ENCODE measurements at regions of chr2 and their contacts with region 1.

Region 1: GRCh38 chr2:84022810-84023431 is 436.2 kb downstream of the SUCLG1 start:
- DNase-seq: peak; percentile 49
- H3K4me3 ChIP-seq: no peak overlapping the region
- H3K27ac ChIP-seq: no peak overlapping the region
- H3K4me1 ChIP-seq: no peaks in the 10 kb centered on the region
- H3K27me3 ChIP-seq: no peaks in the 10 kb centered on the region
- CTCF ChIP-seq: peak; percentile 83 to 84

Region 2: DNA sequence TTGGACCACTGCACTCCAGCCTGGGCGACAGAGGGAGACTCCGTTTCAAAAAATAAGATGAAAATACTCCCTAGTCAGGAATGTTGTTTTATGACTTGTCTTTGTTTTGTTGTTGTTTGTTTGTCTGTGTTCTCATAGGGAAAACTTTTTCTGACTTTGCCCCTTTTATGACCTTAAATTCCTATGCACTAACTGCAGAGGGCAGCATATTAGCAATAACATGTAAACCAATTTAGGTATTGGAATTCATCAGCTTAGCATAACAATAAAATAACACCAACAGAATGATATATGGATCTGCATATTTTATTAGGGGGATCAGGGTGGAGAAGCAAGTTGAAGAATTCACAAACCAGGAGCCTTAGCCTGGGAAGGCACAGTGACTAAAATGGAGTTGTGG is 195.3 kb before region 1 on chr2:
- CTCF ChIA-PET with region 1: no interaction called
- dilution Hi-C with region 1: no loop called
- in situ Hi-C with region 1: no loop called
- intact Hi-C with region 1: loop called (anchors 2 kb)
- DNase-seq: no peak
- H3K4me3 ChIP-seq: no peak overlapping the region
- H3K27ac ChIP-seq: no peak overlapping the region
- H3K4me1 ChIP-seq: no peaks in the 10 kb centered on the region
- H3K27me3 ChIP-seq: no peaks in the 10 kb centered on the region
- CTCF ChIP-seq: peak; percentile 42 to 62

Region 3: DNA sequence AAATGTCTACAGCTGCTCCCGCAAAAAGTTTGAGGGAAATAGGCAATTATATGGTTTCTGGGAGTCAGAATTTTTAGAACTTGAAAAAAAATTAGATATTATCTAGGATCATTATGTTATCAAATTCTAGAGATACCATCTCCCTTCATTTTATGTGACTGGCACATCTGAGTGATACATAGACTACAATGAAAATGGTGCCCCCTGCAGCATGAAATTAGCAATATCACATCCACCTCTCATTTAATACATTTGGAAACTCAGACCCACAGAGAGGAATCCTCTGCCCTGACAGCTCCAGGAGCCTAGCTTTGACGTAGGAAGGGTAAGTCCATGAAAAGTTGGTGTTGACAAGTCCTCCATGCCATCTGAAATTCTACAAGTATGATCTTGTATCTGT is 54.6 kb after region 1 on chr2:
- CTCF ChIA-PET with region 1: no interaction called
- dilution Hi-C with region 1: no loop called
- in situ Hi-C with region 1: loop called (anchors 5 to 10 kb)
- intact Hi-C with region 1: loop called (anchors 1 kb)
- DNase-seq: peak; percentile 39
- H3K4me3 ChIP-seq: no peak overlapping the region
- H3K27ac ChIP-seq: no peak overlapping the region
- H3K4me1 ChIP-seq: no peaks in the 10 kb centered on the region
- H3K27me3 ChIP-seq: no peaks in the 10 kb centered on the region
- CTCF ChIP-seq: peak; percentile 47 to 65

Region 4: DNA sequence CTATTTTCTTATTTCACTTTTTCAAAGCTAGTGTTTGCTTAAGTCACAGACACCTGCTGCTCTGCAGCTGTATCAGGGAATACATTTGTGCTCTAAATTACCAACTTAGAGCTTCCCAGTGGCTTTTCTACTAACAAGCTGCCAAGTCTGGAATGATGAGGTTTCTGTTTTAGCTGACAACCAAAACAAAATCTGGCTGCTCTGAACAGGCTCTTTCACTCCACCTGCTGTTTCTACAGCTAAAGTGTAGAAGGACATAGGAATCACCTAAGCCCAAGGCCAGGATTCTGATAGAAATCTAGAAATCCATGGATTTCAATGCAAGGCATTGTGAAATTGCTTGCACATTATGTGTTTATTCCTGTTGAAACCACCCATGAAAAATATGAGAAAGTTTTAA is 234.9 kb after region 1 on chr2:
- CTCF ChIA-PET with region 1: interaction called, 4 read pairs
- dilution Hi-C with region 1: no loop called
- in situ Hi-C with region 1: no loop called
- intact Hi-C with region 1: loop called (anchors 2 kb)
- DNase-seq: peak; percentile 28
- H3K4me3 ChIP-seq: no peak overlapping the region
- H3K27ac ChIP-seq: no peak overlapping the region
- H3K4me1 ChIP-seq: no peaks in the 10 kb centered on the region
- H3K27me3 ChIP-seq: peaks cover under 1% of the 10 kb centered on the region
- CTCF ChIP-seq: peak; percentile 31 to 58

Region 5: DNA sequence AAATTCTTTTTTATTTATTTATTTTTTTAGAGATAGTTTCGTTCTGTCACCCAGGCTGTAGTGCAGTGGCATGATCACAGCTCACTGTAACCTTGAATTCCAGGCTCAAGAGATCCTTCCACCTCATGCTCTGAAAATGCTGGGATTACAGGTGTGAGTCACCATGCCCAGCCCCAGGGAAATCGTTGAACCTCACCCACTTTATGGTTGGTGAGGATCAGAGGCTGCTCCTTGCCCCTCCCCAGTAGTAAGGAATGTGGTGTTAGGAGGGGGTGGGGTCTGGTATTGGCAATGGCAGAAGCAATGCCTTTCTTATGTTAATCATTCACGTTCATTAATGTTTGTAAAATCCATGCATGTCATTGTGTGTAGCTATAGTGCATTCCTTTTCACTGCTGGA is 274.2 kb after region 1 on chr2:
- CTCF ChIA-PET with region 1: interaction called, 5 read pairs
- dilution Hi-C with region 1: no loop called
- in situ Hi-C with region 1: loop called (anchors 10 to 25 kb)
- intact Hi-C with region 1: no loop called
- DNase-seq: peak; percentile 73
- H3K4me3 ChIP-seq: no peak overlapping the region
- H3K27ac ChIP-seq: peak overlapping the region; percentile 30
- H3K4me1 ChIP-seq: peaks cover 31% of the 10 kb centered on the region
- H3K27me3 ChIP-seq: no peaks in the 10 kb centered on the region
- CTCF ChIP-seq: no peak

Region 6: GRCh38 chr2:84302513-84303412 is 279.8 kb after region 1 on chr2:
- CTCF ChIA-PET with region 1: interaction called, 6 read pairs
- dilution Hi-C with region 1: no loop called
- in situ Hi-C with region 1: loop called (anchors 10 to 25 kb)
- intact Hi-C with region 1: loop called (anchors 1 kb)
- DNase-seq: peak; percentile 46
- H3K4me3 ChIP-seq: no peak overlapping the region
- H3K27ac ChIP-seq: no peak overlapping the region
- H3K4me1 ChIP-seq: peaks cover 17% of the 10 kb centered on the region
- H3K27me3 ChIP-seq: no peaks in the 10 kb centered on the region
- CTCF ChIP-seq: peak; percentile 95 to 96

Region 7: GRCh38 chr2:84424152-84424551 is 401.2 kb after region 1 on chr2:
- CTCF ChIA-PET with region 1: no interaction called
- dilution Hi-C with region 1: no loop called
- in situ Hi-C with region 1: no loop called
- intact Hi-C with region 1: loop called (anchors 5 kb)
- DNase-seq: no peak
- H3K4me3 ChIP-seq: no peak overlapping the region
- H3K27ac ChIP-seq: no peak overlapping the region
- H3K4me1 ChIP-seq: peaks cover 8% of the 10 kb centered on the region
- H3K27me3 ChIP-seq: no peaks in the 10 kb centered on the region
- CTCF ChIP-seq: peak; percentile 50 to 55

Region 8: DNA sequence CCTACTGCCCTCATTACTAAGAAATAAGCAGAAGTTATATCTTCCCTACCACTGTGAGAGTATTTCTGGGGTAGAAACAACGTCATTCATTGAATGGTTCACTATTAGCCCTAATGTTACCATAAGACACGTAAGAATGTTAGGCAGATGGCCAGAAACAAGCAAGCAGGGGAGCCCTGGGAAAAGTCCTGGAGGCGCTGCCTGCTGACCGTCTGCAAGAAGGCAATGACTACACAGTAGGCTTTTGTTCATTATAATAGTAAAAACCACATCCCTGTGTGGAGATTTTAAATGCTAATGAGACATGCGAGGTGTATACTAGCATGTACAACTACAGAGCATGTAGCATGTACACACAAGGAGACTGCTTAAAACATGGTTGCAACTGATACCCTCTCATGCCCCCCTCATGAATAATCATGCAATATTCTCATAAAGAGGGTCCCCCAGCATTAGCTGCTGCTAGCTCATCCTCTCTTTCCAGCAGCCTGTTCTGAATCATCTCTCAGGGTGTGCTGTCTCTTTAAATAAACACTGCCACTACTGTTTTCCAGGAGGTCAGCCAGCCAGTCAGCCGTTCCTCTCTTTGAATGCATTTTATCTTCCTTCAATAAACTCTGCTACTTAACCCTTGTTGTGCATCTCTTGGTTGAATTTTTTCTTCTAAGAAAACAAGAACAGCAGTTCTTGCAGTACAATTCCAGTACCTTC is 412.6 kb after region 1 on chr2:
- CTCF ChIA-PET with region 1: no interaction called
- dilution Hi-C with region 1: no loop called
- in situ Hi-C with region 1: no loop called
- intact Hi-C with region 1: no loop called
- DNase-seq: peak; percentile 85
- H3K4me3 ChIP-seq: no peak overlapping the region
- H3K27ac ChIP-seq: peak overlapping the region; percentile 28
- H3K4me1 ChIP-seq: peaks cover 26% of the 10 kb centered on the region
- H3K27me3 ChIP-seq: no peaks in the 10 kb centered on the region
- CTCF ChIP-seq: no peak

Region 9: GRCh38 chr2:84486441-84487115 is 463.7 kb after region 1 on chr2:
- CTCF ChIA-PET with region 1: no interaction called
- dilution Hi-C with region 1: no loop called
- in situ Hi-C with region 1: no loop called
- intact Hi-C with region 1: no loop called
- DNase-seq: no peak
- H3K4me3 ChIP-seq: no peak overlapping the region
- H3K27ac ChIP-seq: no peak overlapping the region
- H3K4me1 ChIP-seq: peaks cover 7% of the 10 kb centered on the region
- H3K27me3 ChIP-seq: no peaks in the 10 kb centered on the region
- CTCF ChIP-seq: no peak